ENCODE measurements at regions of chr17 and their contacts with region 1.

Region 1: DNA sequence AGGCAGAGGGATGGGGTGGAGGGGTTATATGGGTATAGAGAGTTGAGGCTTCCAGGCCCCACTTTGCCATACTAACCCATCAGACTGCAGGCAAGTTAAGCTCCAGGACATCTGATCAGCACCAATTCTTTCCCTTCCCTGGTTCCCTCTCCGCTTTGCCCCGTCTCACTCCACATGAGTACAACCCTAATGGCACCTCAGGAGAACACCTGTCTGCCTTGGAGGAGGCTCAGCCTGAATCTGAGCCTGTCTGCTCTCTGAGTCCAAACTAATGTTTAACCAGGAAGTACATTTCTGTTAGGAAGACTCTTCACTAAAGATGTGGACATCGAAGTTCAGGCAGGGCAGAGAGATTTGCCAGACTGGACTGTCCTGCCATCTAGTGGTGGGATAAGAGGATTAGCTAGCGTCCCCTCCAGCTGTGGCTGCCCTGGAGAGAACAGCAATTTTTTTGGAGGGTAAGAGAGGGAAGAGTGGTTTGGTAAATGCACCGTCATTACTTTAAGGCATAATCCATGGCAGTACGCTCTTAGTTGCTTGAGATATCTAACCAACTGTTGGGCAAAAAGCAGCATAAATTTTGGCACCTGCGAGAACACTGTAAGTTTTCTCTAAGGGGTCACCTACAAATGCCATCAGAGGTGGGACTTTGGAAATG is 29.2 kb upstream of the LRRC75A start:
- DNase-seq: peak; percentile 34 to 86 (median 65)
- ATAC-seq: peak; percentile 96
- H3K4me3 ChIP-seq: no peak overlapping the region
- H3K4me3 Mint-ChIP-seq: no peak overlapping the region
- H3K27ac ChIP-seq: no peak overlapping the region
- H3K27ac Mint-ChIP-seq: no peak overlapping the region
- H3K4me1 ChIP-seq: no peaks in the 10 kb centered on the region
- H3K4me1 Mint-ChIP-seq: peaks cover 3% of the 10 kb centered on the region
- H3K27me3 ChIP-seq: peaks cover 0 to 2% of the 10 kb centered on the region in 2 experiments
- H3K27me3 Mint-ChIP-seq: peaks cover 36% of the 10 kb centered on the region
- CTCF ChIP-seq: peak; percentile 93

Region 2: DNA sequence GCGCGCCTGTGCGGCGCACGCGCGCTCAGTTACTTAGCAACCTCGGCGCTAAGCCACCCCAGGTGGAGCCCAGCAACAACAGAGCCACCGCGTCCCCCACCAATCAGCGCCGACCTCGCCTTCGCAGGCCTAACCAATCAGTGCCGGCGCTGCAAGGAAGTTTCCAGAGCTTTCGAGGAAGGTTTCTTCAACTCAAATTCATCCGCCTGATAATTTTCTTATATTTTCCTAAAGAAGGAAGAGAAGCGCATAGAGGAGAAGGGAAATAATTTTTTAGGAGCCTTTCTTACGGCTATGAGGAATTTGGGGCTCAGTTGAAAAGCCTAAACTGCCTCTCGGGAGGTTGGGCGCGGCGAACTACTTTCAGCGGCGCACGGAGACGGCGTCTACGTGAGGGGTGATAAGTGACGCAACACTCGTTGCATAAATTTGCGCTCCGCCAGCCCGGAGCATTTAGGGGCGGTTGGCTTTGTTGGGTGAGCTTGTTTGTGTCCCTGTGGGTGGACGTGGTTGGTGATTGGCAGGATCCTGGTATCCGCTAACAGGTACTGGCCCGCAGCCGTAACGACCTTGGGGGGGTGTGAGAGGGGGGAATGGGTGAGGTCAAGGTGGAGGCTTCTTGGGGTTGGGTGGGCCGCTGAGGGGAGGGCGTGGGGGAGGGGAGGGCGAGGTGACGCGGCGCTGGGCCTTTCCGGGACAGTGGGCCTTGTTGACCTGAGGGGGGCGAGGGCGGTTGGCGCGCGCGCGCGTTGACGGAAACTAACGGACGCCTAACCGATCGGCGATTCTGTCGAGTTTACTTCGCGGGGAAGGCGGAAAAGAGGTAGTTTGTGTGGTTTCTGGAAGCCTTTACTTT is 140.3 kb before region 1 on chr17 and contains the start of gene UBB:
- CTCF ChIA-PET with region 1: interaction called, 10 read pairs
- POLR2A ChIA-PET with region 1: interaction called, 4 read pairs
- intact Hi-C with region 1: loop called in 1 of 2 experiments (anchors 1 kb)
- DNase-seq: peak; percentile 88 to 99 (median 94)
- ATAC-seq: peak; percentile 91
- H3K4me3 ChIP-seq: peak within 1 kb of the TSS; percentile 77 to 79
- H3K4me3 Mint-ChIP-seq: peak within 1 kb of the TSS; percentile 85
- H3K27ac ChIP-seq: peak within 1 kb of the TSS; percentile 89 to 99
- H3K27ac Mint-ChIP-seq: peak within 1 kb of the TSS; percentile 96
- H3K4me1 ChIP-seq: peaks cover 29% of the 10 kb centered on the region
- H3K4me1 Mint-ChIP-seq: peaks cover 36% of the 10 kb centered on the region
- H3K27me3 ChIP-seq: no peaks in the 10 kb centered on the region
- H3K27me3 Mint-ChIP-seq: no peaks in the 10 kb centered on the region
- CTCF ChIP-seq: no peak
- total RNA-seq, gene UBB: 829 to 863 TPM

Region 3: DNA sequence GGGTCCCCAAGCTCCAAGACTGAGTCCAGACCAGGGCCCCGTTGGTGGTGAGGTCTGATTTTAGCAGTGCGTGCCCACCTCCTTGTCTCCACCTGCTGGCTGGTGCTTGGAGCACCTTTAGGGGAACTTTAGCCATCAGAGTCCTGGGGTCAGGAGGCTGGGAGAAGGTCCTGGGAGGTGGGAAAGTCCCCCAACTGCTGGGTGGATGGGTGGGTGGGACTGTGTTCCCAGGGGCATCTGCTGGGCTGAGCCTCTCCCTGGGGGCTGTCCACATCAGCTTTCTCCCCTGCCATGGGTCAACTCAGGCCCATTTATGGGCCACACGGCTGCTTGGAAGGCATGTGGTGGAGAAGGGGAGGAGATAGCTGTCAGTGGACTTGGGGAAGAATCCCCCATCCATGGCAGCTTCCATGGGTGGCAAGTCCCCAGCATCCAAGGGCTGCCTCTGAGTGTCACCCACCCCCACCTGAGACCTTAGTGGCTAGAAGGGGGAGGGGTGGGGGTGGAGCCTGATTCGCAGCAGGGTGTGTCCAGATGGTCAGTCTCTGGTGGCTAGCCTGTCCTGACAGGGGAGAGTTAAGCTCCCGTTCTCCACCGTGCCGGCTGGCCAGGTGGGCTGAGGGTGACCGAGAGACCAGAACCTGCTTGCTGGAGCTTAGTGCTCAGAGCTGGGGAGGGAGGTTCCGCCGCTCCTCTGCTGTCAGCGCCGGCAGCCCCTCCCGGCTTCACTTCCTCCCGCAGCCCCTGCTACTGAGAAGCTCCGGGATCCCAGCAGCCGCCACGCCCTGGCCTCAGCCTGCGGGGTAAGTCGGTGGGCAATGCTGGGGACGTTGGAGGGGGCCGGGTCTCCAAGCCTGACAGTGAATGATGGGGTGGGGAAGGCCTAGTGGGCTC is 105.9 kb before region 1 on chr17 and contains the start of gene TRPV2:
- CTCF ChIA-PET with region 1: interaction called, 14 read pairs
- POLR2A ChIA-PET with region 1: no interaction called
- intact Hi-C with region 1: no loop called
- DNase-seq: peak; percentile 23 to 78 (median 64)
- ATAC-seq: peak; percentile 47
- H3K4me3 ChIP-seq: peak within 1 kb of the TSS; percentile 95
- H3K4me3 Mint-ChIP-seq: peak within 1 kb of the TSS; percentile 95
- H3K27ac ChIP-seq: peak within 1 kb of the TSS; percentile 85 to 97
- H3K27ac Mint-ChIP-seq: peak within 1 kb of the TSS; percentile 99
- H3K4me1 ChIP-seq: peaks cover 48% of the 10 kb centered on the region
- H3K4me1 Mint-ChIP-seq: peaks cover 52% of the 10 kb centered on the region
- H3K27me3 ChIP-seq: no peaks in the 10 kb centered on the region
- H3K27me3 Mint-ChIP-seq: no peaks in the 10 kb centered on the region
- CTCF ChIP-seq: peak; percentile 52
- total RNA-seq, gene TRPV2: 37.1 to 37.4 TPM

Region 4: DNA sequence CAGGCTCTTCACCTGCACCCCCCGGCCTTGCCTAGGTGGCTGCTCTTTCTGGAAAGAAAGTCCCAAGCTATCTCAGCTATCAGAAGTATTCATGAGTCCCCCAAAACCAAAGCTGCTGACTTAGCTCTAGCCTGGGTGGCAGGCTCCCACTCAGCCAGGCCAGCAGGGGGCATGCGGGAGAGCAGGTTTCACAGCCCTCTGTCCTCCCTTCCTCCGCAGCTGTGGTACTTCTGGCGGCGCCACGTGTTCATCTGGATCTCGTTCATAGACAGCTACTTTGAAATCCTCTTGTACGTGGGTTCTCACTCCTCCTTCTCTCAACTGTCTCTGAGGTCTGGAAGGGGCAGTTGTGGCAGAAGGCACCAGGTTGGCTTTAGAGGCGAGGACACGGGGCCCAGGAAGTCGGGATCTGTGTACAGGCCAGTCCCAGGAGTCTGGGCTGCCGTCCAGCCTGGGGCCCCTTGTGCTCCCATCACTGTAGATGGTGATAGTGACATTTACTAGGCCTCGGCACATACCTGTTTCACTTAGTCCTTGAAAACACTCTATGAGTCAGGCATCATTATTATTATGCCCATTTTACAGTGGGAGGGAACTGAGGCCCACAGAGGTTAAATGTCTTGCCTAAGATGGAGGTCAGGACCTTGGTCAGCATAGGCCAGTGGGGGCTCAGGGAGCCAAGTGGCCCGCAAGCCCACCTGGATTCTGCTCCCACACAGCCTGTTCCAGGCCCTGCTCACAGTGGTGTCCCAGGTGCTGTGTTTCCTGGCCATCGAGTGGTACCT is 92.9 kb before region 1 on chr17:
- CTCF ChIA-PET with region 1: interaction called, 7 read pairs
- POLR2A ChIA-PET with region 1: no interaction called
- intact Hi-C with region 1: loop called in 1 of 2 experiments (anchors 1 kb)
- DNase-seq: peak in 6 of 9 experiments; percentile 18 to 59 (median 52)
- ATAC-seq: peak; percentile 91
- H3K4me3 ChIP-seq: no peak overlapping the region
- H3K4me3 Mint-ChIP-seq: no peak overlapping the region
- H3K27ac ChIP-seq: no peak overlapping the region
- H3K27ac Mint-ChIP-seq: no peak overlapping the region
- H3K4me1 ChIP-seq: no peaks in the 10 kb centered on the region
- H3K4me1 Mint-ChIP-seq: peaks cover 2% of the 10 kb centered on the region
- H3K27me3 ChIP-seq: no peaks in the 10 kb centered on the region
- H3K27me3 Mint-ChIP-seq: no peaks in the 10 kb centered on the region
- CTCF ChIP-seq: peak; percentile 51

Region 5: GRCh38 chr17:16444258-16444886 is 76.8 kb before region 1 on chr17:
- CTCF ChIA-PET with region 1: interaction called, 130 read pairs
- POLR2A ChIA-PET with region 1: no interaction called
- intact Hi-C with region 1: no loop called
- DNase-seq: no peak
- ATAC-seq: no peak
- H3K4me3 ChIP-seq: no peak overlapping the region
- H3K4me3 Mint-ChIP-seq: no peak overlapping the region
- H3K27ac ChIP-seq: no peak overlapping the region
- H3K27ac Mint-ChIP-seq: no peak overlapping the region
- H3K4me1 ChIP-seq: peaks cover 29% of the 10 kb centered on the region
- H3K4me1 Mint-ChIP-seq: peaks cover 58% of the 10 kb centered on the region
- H3K27me3 ChIP-seq: no peaks in the 10 kb centered on the region
- H3K27me3 Mint-ChIP-seq: no peaks in the 10 kb centered on the region
- CTCF ChIP-seq: no peak

Region 6: GRCh38 chr17:16453493-16453851 is 67.7 kb before region 1 on chr17:
- CTCF ChIA-PET with region 1: interaction called, 130 read pairs
- POLR2A ChIA-PET with region 1: no interaction called
- intact Hi-C with region 1: loop called (anchors 1 kb)
- DNase-seq: no peak
- ATAC-seq: no peak
- H3K4me3 ChIP-seq: no peak overlapping the region
- H3K4me3 Mint-ChIP-seq: no peak overlapping the region
- H3K27ac ChIP-seq: no peak overlapping the region
- H3K27ac Mint-ChIP-seq: peak overlapping the region; percentile 55
- H3K4me1 ChIP-seq: no peaks in the 10 kb centered on the region
- H3K4me1 Mint-ChIP-seq: peaks cover 11% of the 10 kb centered on the region
- H3K27me3 ChIP-seq: no peaks in the 10 kb centered on the region
- H3K27me3 Mint-ChIP-seq: no peaks in the 10 kb centered on the region
- CTCF ChIP-seq: no peak

Measured in CD8-positive, alpha-beta T cell (primary cell).